ENCODE measurements at regions of chr10 and their contacts with region 1.

Region 1: GRCh38 chr10:28179006-28179742 is 123.7 kb downstream of the MPP7 start:
- DNase-seq: peak in 1 of 2 donors; percentile 78
- H3K4me3 ChIP-seq: peak overlapping the region in 1 of 4 donors; percentile 22
- H3K27ac ChIP-seq: peak overlapping the region in 1 of 5 donors; percentile 73
- H3K4me1 ChIP-seq: peaks cover 0 to 25% (median 16%) of the 10 kb centered on the region in 4 donors
- H3K27me3 ChIP-seq: no peaks in the 10 kb centered on the region
- CTCF ChIP-seq: peak in 3 of 7 experiments; percentile 59 to 81 (median 73)
- EP300 ChIP-seq: no peak
- POLR2A ChIP-seq: no peak

Region 2: GRCh38 chr10:27742195-27743011 is 436.8 kb before region 1 on chr10:
- intact Hi-C with region 1: loop called (anchors 5 kb)
- DNase-seq: peak; percentile 86 to 95
- H3K4me3 ChIP-seq: peak overlapping the region; percentile 60 to 77 (median 72)
- H3K27ac ChIP-seq: peak overlapping the region in 4 of 5 donors; percentile 77 to 93 (median 88)
- H3K4me1 ChIP-seq: peaks cover 51 to 63% (median 58%) of the 10 kb centered on the region in 4 donors
- H3K27me3 ChIP-seq: peaks cover 0 to 81% (median 64%) of the 10 kb centered on the region in 3 donors
- CTCF ChIP-seq: peak in 5 of 7 experiments; percentile 61 to 88 (median 76)
- EP300 ChIP-seq: no peak
- POLR2A ChIP-seq: no peak

Region 3: GRCh38 chr10:28317760-28318159 is 138.6 kb after region 1 on chr10:
- intact Hi-C with region 1: no loop called
- DNase-seq: no peak
- H3K4me3 ChIP-seq: no peak overlapping the region
- H3K27ac ChIP-seq: no peak overlapping the region
- H3K4me1 ChIP-seq: peaks cover 0 to 3% (median 0%) of the 10 kb centered on the region in 4 donors
- H3K27me3 ChIP-seq: peaks cover 0 to 4% (median 0%) of the 10 kb centered on the region in 3 donors
- CTCF ChIP-seq: no peak
- EP300 ChIP-seq: no peak
- POLR2A ChIP-seq: no peak

Region 4: GRCh38 chr10:28492116-28492920 is 313.1 kb after region 1 on chr10:
- intact Hi-C with region 1: no loop called
- DNase-seq: peak in 1 of 2 donors; percentile 23
- H3K4me3 ChIP-seq: no peak overlapping the region
- H3K27ac ChIP-seq: peak overlapping the region in 2 of 5 donors; percentile 28 to 56
- H3K4me1 ChIP-seq: peaks cover 7 to 16% (median 12%) of the 10 kb centered on the region in 4 donors
- H3K27me3 ChIP-seq: no peaks in the 10 kb centered on the region
- CTCF ChIP-seq: no peak
- EP300 ChIP-seq: no peak
- POLR2A ChIP-seq: no peak

Measured in stomach (tissue), 19 donors.